ENCODE measurements at regions of chr12 and their contacts with region 1.

Region 1: DNA sequence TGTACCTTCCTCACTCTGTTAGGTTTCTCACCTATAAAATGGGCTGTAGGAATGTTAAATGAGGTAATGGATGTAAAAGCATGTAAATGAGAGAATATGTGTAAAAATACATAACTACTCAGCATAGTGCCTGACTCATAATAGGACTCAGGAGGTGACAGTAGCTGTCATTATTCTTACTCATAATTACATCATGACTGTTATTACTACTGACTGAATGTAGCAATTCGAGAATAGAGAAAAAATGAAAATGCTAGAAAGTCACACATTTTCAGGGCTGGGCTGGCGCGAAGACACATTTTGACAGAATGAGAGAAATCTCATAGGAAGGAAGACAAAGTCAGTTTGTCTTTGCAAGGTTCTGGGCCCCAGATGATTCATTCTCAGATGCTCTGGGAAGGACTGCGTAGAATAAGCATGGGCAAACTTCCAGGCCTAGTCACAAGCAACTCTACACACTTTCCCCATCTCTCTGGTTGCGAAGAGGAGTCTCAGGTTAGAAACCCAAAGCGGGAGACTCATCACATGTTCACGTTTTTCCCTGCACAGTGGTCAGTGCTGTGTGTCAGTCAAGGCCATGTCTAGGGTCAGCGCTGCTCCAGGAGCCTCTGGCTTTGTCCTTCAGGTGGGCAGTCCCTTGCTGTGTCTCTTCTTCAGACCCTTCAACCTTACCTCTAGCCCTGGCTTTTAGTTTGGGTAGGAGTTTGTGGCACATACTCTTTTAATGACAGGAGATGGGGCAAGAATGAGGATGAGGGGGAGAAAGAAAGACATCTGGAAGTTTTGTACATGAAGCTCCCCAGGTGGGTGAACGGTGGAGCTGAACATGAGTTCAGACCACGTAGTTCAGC is 8.4 kb downstream of the GPRC5A start:
- DNase-seq: peak; percentile 87
- ATAC-seq: peak; percentile 87
- H3K4me3 Mint-ChIP-seq: no peak overlapping the region
- H3K27ac Mint-ChIP-seq: peak overlapping the region; percentile 88
- H3K4me1 Mint-ChIP-seq: peaks cover 39% of the 10 kb centered on the region
- H3K27me3 Mint-ChIP-seq: peaks cover 16% of the 10 kb centered on the region

Region 2: GRCh38 chr12:12356886-12357718 is 542.7 kb before region 1 on chr12 and contains the start of gene BORCS5:
- CTCF ChIA-PET with region 1: no interaction called
- POLR2A ChIA-PET with region 1: no interaction called
- intact Hi-C with region 1: loop called in 1 of 2 experiments (anchors 5 kb)
- DNase-seq: peak; percentile 99
- ATAC-seq: peak; percentile 94
- H3K4me3 Mint-ChIP-seq: peak within 1 kb of the TSS; percentile 98
- H3K27ac Mint-ChIP-seq: peak within 1 kb of the TSS; percentile 99
- H3K4me1 Mint-ChIP-seq: peaks cover 38% of the 10 kb centered on the region
- H3K27me3 Mint-ChIP-seq: no peaks in the 10 kb centered on the region
- total RNA-seq, gene BORCS5: 41.8 to 45.0 TPM

Region 3: DNA sequence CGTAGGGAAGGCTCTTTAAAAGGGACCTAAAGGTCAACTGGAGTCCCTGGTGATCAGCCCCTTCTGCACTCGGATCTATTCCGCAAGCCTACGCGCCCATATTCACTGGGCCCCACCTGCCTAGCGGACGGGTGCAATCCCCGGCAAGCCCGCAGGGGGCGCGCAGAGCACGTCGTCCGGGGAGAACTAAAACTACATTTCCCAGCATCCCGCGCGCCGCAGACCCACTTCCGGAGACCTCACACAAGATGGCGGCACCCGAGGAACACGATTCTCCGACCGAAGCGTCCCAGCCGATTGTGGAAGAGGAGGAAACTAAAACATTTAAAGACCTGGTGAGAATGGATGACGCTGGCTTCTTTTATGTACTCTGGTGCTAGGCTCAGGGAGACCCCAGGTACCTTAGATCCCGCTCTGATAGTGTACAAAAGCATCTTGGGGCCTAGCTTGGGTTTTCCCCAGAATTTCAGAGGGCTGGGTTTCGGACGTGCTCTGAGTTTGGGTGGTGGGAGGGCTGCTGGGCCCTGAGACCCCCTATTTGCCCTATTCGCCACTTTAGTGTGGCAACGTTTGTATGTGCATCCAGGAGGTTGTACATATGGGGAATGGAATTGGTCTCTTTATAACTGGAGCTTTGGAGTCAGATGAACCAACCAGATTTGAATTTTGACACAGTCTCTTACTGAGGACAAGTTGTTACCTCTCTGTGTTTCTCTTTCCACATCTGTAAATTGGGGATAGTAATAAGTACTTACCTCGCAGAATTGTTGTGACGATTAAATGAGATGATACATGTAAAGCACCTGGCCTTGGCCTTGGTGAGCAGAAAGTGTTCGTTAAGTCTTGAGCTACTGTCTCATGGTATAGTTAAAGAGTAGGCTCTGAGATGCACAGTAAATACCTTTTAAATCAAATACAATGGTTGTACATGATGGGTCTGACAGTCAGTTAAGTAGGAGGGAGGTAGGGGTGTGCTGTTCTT is 86.3 kb before region 1 on chr12 and contains the start of gene DDX47:
- CTCF ChIA-PET with region 1: interaction called, 4 read pairs
- POLR2A ChIA-PET with region 1: no interaction called
- intact Hi-C with region 1: loop called in 1 of 2 experiments (anchors 1 kb)
- DNase-seq: peak; percentile 99
- ATAC-seq: peak; percentile 90
- H3K4me3 Mint-ChIP-seq: peak within 1 kb of the TSS; percentile 95
- H3K27ac Mint-ChIP-seq: peak within 1 kb of the TSS; percentile 91
- H3K4me1 Mint-ChIP-seq: peaks cover 61% of the 10 kb centered on the region
- H3K27me3 Mint-ChIP-seq: no peaks in the 10 kb centered on the region
- total RNA-seq, gene DDX47: 91.3 to 91.9 TPM

Region 4: GRCh38 chr12:13044002-13044905 is 144.5 kb after region 1 on chr12 and contains the start of gene FAM234B:
- CTCF ChIA-PET with region 1: interaction called, 3 read pairs
- POLR2A ChIA-PET with region 1: no interaction called
- intact Hi-C with region 1: loop called (anchors 2 to 5 kb)
- DNase-seq: peak; percentile 85
- ATAC-seq: peak; percentile 88
- H3K4me3 Mint-ChIP-seq: peak within 1 kb of the TSS; percentile 83
- H3K27ac Mint-ChIP-seq: peak within 1 kb of the TSS; percentile 77
- H3K4me1 Mint-ChIP-seq: peaks cover 27% of the 10 kb centered on the region
- H3K27me3 Mint-ChIP-seq: peaks cover 5% of the 10 kb centered on the region
- total RNA-seq, gene FAM234B: 11.1 to 12.2 TPM

Region 5: DNA sequence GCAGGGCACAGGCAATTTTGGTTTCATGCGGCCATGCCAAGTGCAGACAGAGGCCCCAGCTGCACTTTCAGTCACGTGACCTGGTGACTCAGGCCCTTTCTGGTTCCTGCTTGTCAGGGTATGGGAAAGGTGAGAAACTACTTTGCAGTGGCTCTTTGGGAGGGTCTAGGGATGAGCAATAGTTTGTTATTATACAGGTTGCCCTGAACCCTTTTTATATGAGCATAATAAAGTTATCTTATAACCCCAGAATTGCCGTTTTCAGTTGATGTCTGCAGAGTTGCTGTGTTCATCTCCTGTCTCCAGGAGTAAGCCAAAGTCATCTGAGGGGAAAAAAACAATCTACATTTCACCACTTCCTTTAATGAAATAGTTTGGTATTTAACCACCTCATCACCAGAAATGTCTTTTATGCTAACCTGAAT is 265.9 kb after region 1 on chr12:
- CTCF ChIA-PET with region 1: no interaction called
- POLR2A ChIA-PET with region 1: no interaction called
- intact Hi-C with region 1: loop called in 1 of 2 experiments (anchors 1 kb)
- DNase-seq: peak; percentile 92
- ATAC-seq: peak; percentile 97
- H3K4me3 Mint-ChIP-seq: no peak overlapping the region
- H3K27ac Mint-ChIP-seq: peak overlapping the region; percentile 58
- H3K4me1 Mint-ChIP-seq: peaks cover 24% of the 10 kb centered on the region
- H3K27me3 Mint-ChIP-seq: peaks cover 2% of the 10 kb centered on the region

Region 6: GRCh38 chr12:13211859-13212664 is 312.3 kb after region 1 on chr12:
- CTCF ChIA-PET with region 1: no interaction called
- POLR2A ChIA-PET with region 1: no interaction called
- intact Hi-C with region 1: loop called in 1 of 2 experiments (anchors 5 kb)
- DNase-seq: peak; percentile 84
- ATAC-seq: peak; percentile 59
- H3K4me3 Mint-ChIP-seq: no peak overlapping the region
- H3K27ac Mint-ChIP-seq: peak overlapping the region; percentile 49
- H3K4me1 Mint-ChIP-seq: peaks cover 29% of the 10 kb centered on the region
- H3K27me3 Mint-ChIP-seq: no peaks in the 10 kb centered on the region

Measured in activated CD4-positive, alpha-beta T cell treated with anti-CD3 and anti-CD28 coated beads for 36 hours (primary cell).